Activated CD8-positive, alpha-beta memory T cell treated with anti-CD3 and anti-CD28 coated beads, Interleukin-2, amount 10 ng/mL, durations not matched to agents 7 days and 5 days (primary cell): ENCODE measurements at regions of chr5 and their contacts with region 1.

Region 1: DNA sequence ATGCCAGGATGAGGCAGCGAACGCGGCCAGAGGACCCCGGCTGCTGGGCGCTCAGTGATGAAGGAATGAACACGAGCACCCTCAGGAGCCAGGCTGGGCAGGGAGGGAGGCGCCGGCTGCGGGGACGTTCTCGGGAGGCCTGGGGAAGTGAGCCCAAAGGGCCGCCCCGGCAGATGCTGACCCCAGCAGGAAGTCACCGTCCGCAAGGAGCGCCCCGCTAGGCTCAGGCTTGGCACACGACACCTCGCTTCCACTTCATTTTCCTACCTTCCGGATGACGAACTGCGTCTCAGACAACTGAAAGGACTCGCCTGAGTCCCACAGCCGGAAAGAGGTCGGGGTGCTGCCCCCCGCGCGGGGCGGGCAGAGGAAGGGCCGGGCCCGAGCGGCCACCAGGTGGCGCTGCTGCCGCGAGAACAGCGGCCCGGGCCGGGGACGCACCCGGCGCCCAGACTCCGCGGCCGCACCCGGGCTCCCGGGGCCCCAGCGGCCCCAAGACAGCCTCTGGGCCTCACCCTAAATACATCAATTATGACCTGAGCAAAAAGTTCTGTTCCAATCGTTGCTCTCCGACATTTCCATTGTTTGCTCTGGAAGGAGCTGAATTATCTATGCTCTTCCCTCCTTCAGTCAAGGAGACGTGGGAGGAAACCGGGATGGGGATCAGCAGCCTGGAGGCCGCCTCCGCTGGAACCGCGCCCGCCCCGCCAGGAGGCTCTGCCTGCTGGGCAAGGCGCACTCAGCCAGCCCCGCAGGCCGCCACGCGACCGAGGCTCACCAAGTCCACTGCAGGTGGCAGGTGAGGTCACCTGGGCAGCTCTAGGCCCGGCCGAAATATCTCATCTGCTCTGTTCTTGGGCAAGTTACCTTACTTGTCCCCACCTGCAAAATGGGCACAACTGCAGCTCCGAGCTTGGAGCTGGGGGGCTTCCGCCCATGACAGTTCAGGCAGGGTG is 107.0 kb downstream of the ZNF354C start:
- DNase-seq: peak; percentile 50
- ATAC-seq: peak; percentile 81
- H3K4me3 Mint-ChIP-seq: no peak overlapping the region
- H3K27ac Mint-ChIP-seq: no peak overlapping the region
- H3K4me1 Mint-ChIP-seq: no peaks in the 10 kb centered on the region
- H3K27me3 Mint-ChIP-seq: no peaks in the 10 kb centered on the region

Region 2: GRCh38 chr5:179154991-179155955 is 11.9 kb before region 1 on chr5:
- CTCF ChIA-PET with region 1: no interaction called
- DNase-seq: no peak
- ATAC-seq: no peak
- H3K4me3 Mint-ChIP-seq: no peak overlapping the region
- H3K27ac Mint-ChIP-seq: no peak overlapping the region
- H3K4me1 Mint-ChIP-seq: no peaks in the 10 kb centered on the region
- H3K27me3 Mint-ChIP-seq: no peaks in the 10 kb centered on the region

Region 3: GRCh38 chr5:179495906-179496455 is 328.8 kb after region 1 on chr5:
- CTCF ChIA-PET with region 1: interaction called, 10 read pairs
- DNase-seq: no peak
- ATAC-seq: no peak
- H3K4me3 Mint-ChIP-seq: no peak overlapping the region
- H3K27ac Mint-ChIP-seq: no peak overlapping the region
- H3K4me1 Mint-ChIP-seq: no peaks in the 10 kb centered on the region
- H3K27me3 Mint-ChIP-seq: no peaks in the 10 kb centered on the region